CD4-positive, alpha-beta memory T cell (primary cell): ENCODE measurements at regions of chr11 and their contacts with region 1.

Region 1: GRCh38 chr11:9015677-9016076 is 11.9 kb upstream of the NRIP3 start:
- DNase-seq: peak; percentile 51 to 59 (median 55)
- H3K4me3 ChIP-seq: no peak overlapping the region
- H3K4me3 Mint-ChIP-seq: no peak overlapping the region
- H3K27ac ChIP-seq: no peak overlapping the region
- H3K27ac Mint-ChIP-seq: no peak overlapping the region
- H3K4me1 ChIP-seq: peaks cover 20% of the 10 kb centered on the region
- H3K4me1 Mint-ChIP-seq: peaks cover 18 to 37% (median 25%) of the 10 kb centered on the region in 4 donors
- H3K27me3 ChIP-seq: no peaks in the 10 kb centered on the region
- H3K27me3 Mint-ChIP-seq: peaks cover 0 to 2% of the 10 kb centered on the region in 2 donors

Region 2: GRCh38 chr11:8813658-8814057 is 202.0 kb before region 1 on chr11:
- CTCF ChIA-PET with region 1: no interaction called
- POLR2A ChIA-PET with region 1: no interaction called
- intact Hi-C with region 1: no loop called
- DNase-seq: peak in 2 of 5 donors; percentile 4 to 8
- H3K4me3 ChIP-seq: no peak overlapping the region
- H3K4me3 Mint-ChIP-seq: no peak overlapping the region
- H3K27ac ChIP-seq: no peak overlapping the region
- H3K27ac Mint-ChIP-seq: no peak overlapping the region
- H3K4me1 ChIP-seq: peaks cover 7% of the 10 kb centered on the region
- H3K4me1 Mint-ChIP-seq: peaks cover 3 to 10% (median 6%) of the 10 kb centered on the region in 4 donors
- H3K27me3 ChIP-seq: no peaks in the 10 kb centered on the region
- H3K27me3 Mint-ChIP-seq: peaks cover 8 to 14% of the 10 kb centered on the region in 2 donors

Region 3: DNA sequence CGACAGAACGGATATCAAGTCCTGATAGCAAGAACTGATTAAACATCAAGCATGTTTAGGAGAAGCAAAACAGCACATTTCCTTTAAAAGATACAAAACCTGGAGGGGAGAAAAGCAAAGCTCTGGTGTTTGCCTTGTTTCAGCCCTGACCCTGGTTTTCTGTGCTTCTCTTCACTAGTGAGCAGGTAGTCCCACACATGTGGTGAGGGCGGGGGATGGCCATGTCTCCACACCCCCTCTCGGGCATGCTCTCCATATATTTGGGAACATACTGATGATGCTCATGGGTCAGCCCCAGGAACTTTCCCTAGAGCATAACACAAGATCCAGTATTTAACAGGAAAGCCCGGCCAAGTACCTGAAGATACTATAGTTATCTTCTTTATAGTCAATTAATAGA is 93.0 kb before region 1 on chr11:
- CTCF ChIA-PET with region 1: no interaction called
- POLR2A ChIA-PET with region 1: no interaction called
- intact Hi-C with region 1: no loop called
- DNase-seq: no peak
- H3K4me3 ChIP-seq: no peak overlapping the region
- H3K4me3 Mint-ChIP-seq: no peak overlapping the region
- H3K27ac ChIP-seq: no peak overlapping the region
- H3K27ac Mint-ChIP-seq: peak overlapping the region in 1 of 7 donors; percentile 19
- H3K4me1 ChIP-seq: no peaks in the 10 kb centered on the region
- H3K4me1 Mint-ChIP-seq: no peaks in the 10 kb centered on the region
- H3K27me3 ChIP-seq: no peaks in the 10 kb centered on the region
- H3K27me3 Mint-ChIP-seq: no peaks in the 10 kb centered on the region

Region 4: DNA sequence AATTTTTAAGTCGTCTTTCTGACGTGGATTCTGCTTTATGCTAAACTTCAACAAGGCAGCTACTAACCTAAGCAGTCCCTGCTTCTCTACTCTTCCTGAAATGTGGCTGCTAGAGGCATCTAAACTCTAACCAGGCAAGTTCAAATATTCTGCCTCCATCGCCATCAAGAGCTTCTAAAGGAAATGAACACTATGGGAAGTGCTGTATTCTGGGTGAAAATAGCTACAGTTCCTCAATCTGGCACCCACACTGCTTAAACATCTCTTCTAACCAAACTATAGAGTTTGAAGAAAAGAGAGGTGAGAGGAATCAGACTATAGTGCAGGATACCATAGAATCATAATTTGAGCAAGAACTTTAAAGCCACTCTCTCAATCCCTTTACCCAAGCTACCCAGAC is 18.2 kb before region 1 on chr11:
- CTCF ChIA-PET with region 1: interaction called, 44 read pairs
- POLR2A ChIA-PET with region 1: no interaction called
- intact Hi-C with region 1: no loop called
- DNase-seq: no peak
- H3K4me3 ChIP-seq: no peak overlapping the region
- H3K4me3 Mint-ChIP-seq: no peak overlapping the region
- H3K27ac ChIP-seq: no peak overlapping the region
- H3K27ac Mint-ChIP-seq: no peak overlapping the region
- H3K4me1 ChIP-seq: no peaks in the 10 kb centered on the region
- H3K4me1 Mint-ChIP-seq: peaks cover 2 to 9% (median 3%) of the 10 kb centered on the region in 4 donors
- H3K27me3 ChIP-seq: peaks cover 14% of the 10 kb centered on the region
- H3K27me3 Mint-ChIP-seq: peaks cover 18 to 21% of the 10 kb centered on the region in 2 donors

Region 5: GRCh38 chr11:9003573-9004309 is 11.9 kb before region 1 on chr11 and contains the start of gene NRIP3:
- CTCF ChIA-PET with region 1: interaction called, 44 read pairs
- POLR2A ChIA-PET with region 1: interaction called, 4 read pairs
- intact Hi-C with region 1: no loop called
- DNase-seq: peak; percentile 79 to 88 (median 82)
- H3K4me3 ChIP-seq: peak within 1 kb of the TSS; percentile 30 to 41
- H3K4me3 Mint-ChIP-seq: peak within 1 kb of the TSS; percentile 79 to 91 (median 86)
- H3K27ac ChIP-seq: no peak within 1 kb of the TSS
- H3K27ac Mint-ChIP-seq: peak within 1 kb of the TSS; percentile 57 to 87 (median 79)
- H3K4me1 ChIP-seq: peaks cover 16% of the 10 kb centered on the region
- H3K4me1 Mint-ChIP-seq: peaks cover 12 to 28% (median 18%) of the 10 kb centered on the region in 4 donors
- H3K27me3 ChIP-seq: peaks cover 19% of the 10 kb centered on the region
- H3K27me3 Mint-ChIP-seq: peaks cover 11 to 22% of the 10 kb centered on the region in 2 donors
- total RNA-seq, gene NRIP3: 1.5 to 1.7 TPM

Region 6: GRCh38 chr11:9030601-9031000 is 14.9 kb after region 1 on chr11:
- CTCF ChIA-PET with region 1: interaction called, 12 read pairs
- POLR2A ChIA-PET with region 1: no interaction called
- intact Hi-C with region 1: no loop called
- DNase-seq: no peak
- H3K4me3 ChIP-seq: no peak overlapping the region
- H3K4me3 Mint-ChIP-seq: no peak overlapping the region
- H3K27ac ChIP-seq: no peak overlapping the region
- H3K27ac Mint-ChIP-seq: no peak overlapping the region
- H3K4me1 ChIP-seq: no peaks in the 10 kb centered on the region
- H3K4me1 Mint-ChIP-seq: no peaks in the 10 kb centered on the region
- H3K27me3 ChIP-seq: no peaks in the 10 kb centered on the region
- H3K27me3 Mint-ChIP-seq: peaks cover 0 to 2% of the 10 kb centered on the region in 2 donors

Region 7: DNA sequence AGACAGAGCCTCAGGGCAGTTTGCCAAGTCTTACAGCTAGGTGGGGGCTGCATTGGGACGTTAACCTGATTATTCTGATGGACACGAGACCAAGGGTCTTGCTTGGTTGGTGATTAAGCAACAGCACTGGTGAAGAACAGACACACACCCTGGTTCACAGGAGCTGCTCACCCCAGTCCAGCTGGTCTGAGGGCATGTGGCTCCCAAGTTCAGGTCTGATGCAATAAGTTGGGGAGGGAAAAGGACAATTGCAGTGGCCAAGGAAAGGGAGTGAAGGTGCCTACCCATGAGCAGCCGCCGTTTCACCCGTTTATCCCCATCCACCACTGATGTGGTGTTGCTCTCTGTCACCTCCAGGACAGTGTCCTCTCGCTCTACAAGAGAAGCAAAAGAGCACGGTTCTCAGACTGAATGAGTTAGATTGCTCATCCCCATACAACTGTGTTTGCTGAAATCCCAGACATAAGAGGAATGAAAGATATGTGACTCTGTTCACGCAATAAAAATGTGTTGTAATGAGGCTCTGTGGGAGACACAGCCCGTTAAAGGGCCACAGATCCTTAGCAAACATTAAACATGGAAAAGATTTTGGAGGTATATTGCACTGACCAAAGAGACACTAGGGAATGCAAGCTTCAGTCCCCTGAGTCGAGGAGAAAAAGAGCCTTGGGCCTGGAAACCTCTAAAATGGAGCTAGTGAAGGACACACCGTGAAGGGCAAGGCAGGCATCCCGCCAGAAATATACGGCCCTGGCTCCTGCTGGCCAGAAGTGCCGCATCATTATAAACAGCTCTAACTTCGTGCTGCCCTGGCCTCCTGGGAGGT is 50.1 kb after region 1 on chr11:
- CTCF ChIA-PET with region 1: interaction called, 11 read pairs
- POLR2A ChIA-PET with region 1: no interaction called
- intact Hi-C with region 1: no loop called
- DNase-seq: no peak
- H3K4me3 ChIP-seq: no peak overlapping the region
- H3K4me3 Mint-ChIP-seq: no peak overlapping the region
- H3K27ac ChIP-seq: no peak overlapping the region
- H3K27ac Mint-ChIP-seq: no peak overlapping the region
- H3K4me1 ChIP-seq: no peaks in the 10 kb centered on the region
- H3K4me1 Mint-ChIP-seq: peaks cover 0 to 2% (median under 1%) of the 10 kb centered on the region in 4 donors
- H3K27me3 ChIP-seq: no peaks in the 10 kb centered on the region
- H3K27me3 Mint-ChIP-seq: peaks cover under 1 to 4% of the 10 kb centered on the region in 2 donors

Region 8: DNA sequence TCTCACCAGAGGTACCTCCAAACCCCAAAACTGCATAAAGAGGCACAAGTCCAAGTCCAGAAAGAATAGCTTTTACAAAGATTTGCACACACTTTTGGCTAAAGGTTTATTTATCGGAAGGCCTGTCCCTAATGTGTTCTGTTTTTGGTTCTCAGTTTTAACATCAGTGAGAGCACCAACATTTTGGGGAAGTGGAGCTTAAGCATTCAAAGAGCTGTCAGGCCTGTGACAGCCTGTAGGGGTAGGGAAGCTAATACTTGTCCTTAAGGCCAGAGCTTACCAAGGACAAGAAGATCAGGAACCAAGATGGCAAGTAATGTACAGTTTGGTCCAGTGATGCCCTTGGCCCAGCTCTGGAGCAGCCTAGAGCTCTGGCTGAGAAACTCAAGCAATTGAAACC is 114.6 kb after region 1 on chr11:
- CTCF ChIA-PET with region 1: interaction called, 15 read pairs
- POLR2A ChIA-PET with region 1: no interaction called
- intact Hi-C with region 1: no loop called
- DNase-seq: no peak
- H3K4me3 ChIP-seq: no peak overlapping the region
- H3K4me3 Mint-ChIP-seq: no peak overlapping the region
- H3K27ac ChIP-seq: no peak overlapping the region
- H3K27ac Mint-ChIP-seq: no peak overlapping the region
- H3K4me1 ChIP-seq: no peaks in the 10 kb centered on the region
- H3K4me1 Mint-ChIP-seq: peaks cover 0 to 10% (median 4%) of the 10 kb centered on the region in 4 donors
- H3K27me3 ChIP-seq: no peaks in the 10 kb centered on the region
- H3K27me3 Mint-ChIP-seq: no peaks in the 10 kb centered on the region